ENCODE measurements at regions of chr5 and their contacts with region 1.

Region 1: GRCh38 chr5:39209924-39210323 is 9.4 kb downstream of the FYB1 start:
- DNase-seq: peak in 8 of 9 donors; percentile 77 to 86 (median 81)
- ATAC-seq: peak; percentile 84
- H3K4me3 ChIP-seq: peak overlapping the region; percentile 36
- H3K4me3 Mint-ChIP-seq: peak overlapping the region; percentile 70 to 98 (median 84)
- H3K27ac ChIP-seq: peak overlapping the region; percentile 93
- H3K27ac Mint-ChIP-seq: peak overlapping the region; percentile 93 to 99 (median 98)
- H3K4me1 ChIP-seq: peaks cover 91 to 98% of the 10 kb centered on the region in 2 donors
- H3K4me1 Mint-ChIP-seq: peaks cover 71 to 99% (median 95%) of the 10 kb centered on the region in 7 donors
- H3K27me3 ChIP-seq: no peaks in the 10 kb centered on the region
- H3K27me3 Mint-ChIP-seq: peaks cover 0 to 2% (median 0%) of the 10 kb centered on the region in 5 donors

Region 2: DNA sequence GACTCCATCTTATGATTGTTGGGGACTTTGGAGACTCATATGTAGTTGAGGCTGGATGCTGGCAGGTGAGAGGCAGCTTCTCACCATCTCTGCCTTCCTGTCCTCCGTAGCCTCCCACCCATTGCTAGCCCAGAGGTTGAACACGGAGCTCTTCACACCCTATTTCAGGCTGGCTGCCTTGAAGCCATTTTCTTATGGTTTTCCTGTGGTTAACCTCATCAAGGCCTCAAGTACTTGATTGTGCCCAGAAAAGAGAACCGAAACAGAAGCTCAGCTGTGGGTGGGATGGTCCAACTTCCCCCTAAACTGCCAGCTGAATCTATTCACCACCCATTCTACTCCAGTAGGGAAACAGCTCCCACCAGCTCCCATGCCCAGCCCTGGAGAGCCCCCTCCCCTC is 756.4 kb before region 1 on chr5:
- CTCF ChIA-PET with region 1: no interaction called
- POLR2A ChIA-PET with region 1: no interaction called
- intact Hi-C with region 1: loop called in 1 of 2 experiments (anchors 5 kb)
- DNase-seq: peak in 8 of 9 donors; percentile 50 to 82 (median 73)
- ATAC-seq: peak; percentile 86
- H3K4me3 ChIP-seq: no peak overlapping the region
- H3K4me3 Mint-ChIP-seq: peak overlapping the region; percentile 36 to 77 (median 66)
- H3K27ac ChIP-seq: no peak overlapping the region
- H3K27ac Mint-ChIP-seq: peak overlapping the region in 8 of 9 donors; percentile 6 to 82 (median 43)
- H3K4me1 ChIP-seq: peaks cover 21 to 32% of the 10 kb centered on the region in 2 donors
- H3K4me1 Mint-ChIP-seq: peaks cover 19 to 38% (median 30%) of the 10 kb centered on the region in 7 donors
- H3K27me3 ChIP-seq: peaks cover 0 to 3% of the 10 kb centered on the region in 2 donors
- H3K27me3 Mint-ChIP-seq: peaks cover 68 to 89% (median 82%) of the 10 kb centered on the region in 5 donors

Region 3: GRCh38 chr5:39164529-39165402 is 45.2 kb before region 1 on chr5:
- CTCF ChIA-PET with region 1: interaction called, 3 read pairs
- POLR2A ChIA-PET with region 1: interaction called, 679 read pairs
- intact Hi-C with region 1: loop called in 1 of 2 experiments (anchors 1 kb)
- DNase-seq: peak in 1 of 9 donors; percentile 34
- ATAC-seq: peak; percentile 71
- H3K4me3 ChIP-seq: peak overlapping the region; percentile 12
- H3K4me3 Mint-ChIP-seq: peak overlapping the region; percentile 58 to 83 (median 76)
- H3K27ac ChIP-seq: peak overlapping the region; percentile 60
- H3K27ac Mint-ChIP-seq: peak overlapping the region; percentile 78 to 96 (median 89)
- H3K4me1 ChIP-seq: peaks cover 73 to 74% of the 10 kb centered on the region in 2 donors
- H3K4me1 Mint-ChIP-seq: peaks cover 71 to 99% (median 95%) of the 10 kb centered on the region in 7 donors
- H3K27me3 ChIP-seq: no peaks in the 10 kb centered on the region
- H3K27me3 Mint-ChIP-seq: no peaks in the 10 kb centered on the region

Region 4: DNA sequence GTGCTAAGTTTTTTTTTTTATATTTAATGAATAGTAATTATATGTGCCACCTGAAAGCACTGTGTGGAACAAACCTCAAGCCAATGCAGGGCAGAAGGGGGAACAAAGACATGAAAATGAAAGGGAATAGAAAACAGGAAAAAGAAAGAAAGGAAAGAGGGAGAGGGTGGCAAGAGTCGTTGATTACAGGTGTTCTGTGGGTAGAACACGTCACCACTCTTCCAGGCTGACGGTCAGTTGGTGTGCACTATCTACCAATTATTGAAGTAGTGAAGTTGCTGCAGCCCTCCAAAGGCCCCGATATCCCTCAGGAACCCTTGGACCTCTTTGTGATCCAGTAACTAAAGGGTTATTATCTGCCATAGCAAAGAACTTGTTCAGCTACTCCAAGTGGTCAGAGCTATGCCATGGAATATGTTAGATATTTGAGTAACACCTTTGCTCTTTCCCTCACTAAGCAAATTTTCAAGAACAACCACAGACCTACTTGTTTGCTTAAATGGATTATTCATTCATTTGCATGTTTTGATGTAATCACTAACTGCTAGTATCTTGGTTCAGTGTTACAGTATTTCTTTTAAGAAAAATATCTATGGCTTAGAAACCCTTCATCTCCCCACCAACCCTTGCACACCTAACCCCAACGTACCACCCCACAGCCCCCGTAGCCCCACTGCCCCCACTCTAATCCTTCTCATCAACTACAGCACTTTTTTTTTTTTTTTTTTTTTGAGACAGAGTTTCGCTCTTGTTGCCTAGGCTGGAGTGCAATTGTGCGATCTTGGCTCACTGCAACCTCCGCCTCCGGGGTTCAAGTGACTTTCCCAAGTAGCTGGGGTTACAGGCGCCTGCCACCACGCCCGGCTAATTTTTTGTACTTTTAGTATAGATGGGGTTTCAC is 21.8 kb before region 1 on chr5:
- CTCF ChIA-PET with region 1: interaction called, 6 read pairs
- POLR2A ChIA-PET with region 1: interaction called, 679 read pairs
- intact Hi-C with region 1: loop called in 1 of 2 experiments (anchors 1 kb)
- DNase-seq: peak in 2 of 9 donors; percentile 46 to 50
- ATAC-seq: peak; percentile 45
- H3K4me3 ChIP-seq: peak overlapping the region; percentile 36
- H3K4me3 Mint-ChIP-seq: peak overlapping the region; percentile 78 to 98 (median 88)
- H3K27ac ChIP-seq: peak overlapping the region; percentile 73
- H3K27ac Mint-ChIP-seq: peak overlapping the region; percentile 92 to 99 (median 98)
- H3K4me1 ChIP-seq: peaks cover 75 to 85% of the 10 kb centered on the region in 2 donors
- H3K4me1 Mint-ChIP-seq: peaks cover 58 to 97% (median 91%) of the 10 kb centered on the region in 7 donors
- H3K27me3 ChIP-seq: no peaks in the 10 kb centered on the region
- H3K27me3 Mint-ChIP-seq: no peaks in the 10 kb centered on the region

Region 5: GRCh38 chr5:39194466-39195136 is 15.3 kb before region 1 on chr5:
- CTCF ChIA-PET with region 1: interaction called, 37 read pairs
- POLR2A ChIA-PET with region 1: interaction called, 301 read pairs
- intact Hi-C with region 1: no loop called
- DNase-seq: peak in 1 of 9 donors; percentile 17
- ATAC-seq: no peak
- H3K4me3 ChIP-seq: peak overlapping the region; percentile 46
- H3K4me3 Mint-ChIP-seq: peak overlapping the region; percentile 75 to 98 (median 88)
- H3K27ac ChIP-seq: peak overlapping the region; percentile 83
- H3K27ac Mint-ChIP-seq: peak overlapping the region; percentile 85 to 98 (median 94)
- H3K4me1 ChIP-seq: peaks cover 67 to 69% of the 10 kb centered on the region in 2 donors
- H3K4me1 Mint-ChIP-seq: peaks cover 52 to 78% (median 70%) of the 10 kb centered on the region in 7 donors
- H3K27me3 ChIP-seq: no peaks in the 10 kb centered on the region
- H3K27me3 Mint-ChIP-seq: no peaks in the 10 kb centered on the region

Region 6: GRCh38 chr5:39274398-39275085 is 64.6 kb after region 1 on chr5:
- CTCF ChIA-PET with region 1: no interaction called
- POLR2A ChIA-PET with region 1: interaction called, 10 read pairs
- intact Hi-C with region 1: no loop called
- DNase-seq: peak in 7 of 9 donors; percentile 29 to 52 (median 46)
- ATAC-seq: peak; percentile 68
- H3K4me3 ChIP-seq: peak overlapping the region; percentile 59
- H3K4me3 Mint-ChIP-seq: peak overlapping the region; percentile 63 to 88 (median 85)
- H3K27ac ChIP-seq: peak overlapping the region; percentile 74
- H3K27ac Mint-ChIP-seq: peak overlapping the region; percentile 92 to 98 (median 96)
- H3K4me1 ChIP-seq: peaks cover 34 to 49% of the 10 kb centered on the region in 2 donors
- H3K4me1 Mint-ChIP-seq: peaks cover 25 to 67% (median 47%) of the 10 kb centered on the region in 7 donors
- H3K27me3 ChIP-seq: no peaks in the 10 kb centered on the region
- H3K27me3 Mint-ChIP-seq: no peaks in the 10 kb centered on the region

Region 7: GRCh38 chr5:40404613-40405012 is 1194.7 kb after region 1 on chr5:
- CTCF ChIA-PET with region 1: no interaction called
- POLR2A ChIA-PET with region 1: no interaction called
- intact Hi-C with region 1: loop called in 1 of 2 experiments (anchors 10 kb)
- DNase-seq: peak in 7 of 9 donors; percentile 36 to 66 (median 60)
- ATAC-seq: peak; percentile 73
- H3K4me3 ChIP-seq: no peak overlapping the region
- H3K4me3 Mint-ChIP-seq: peak overlapping the region in 9 of 10 donors; percentile 34 to 83 (median 62)
- H3K27ac ChIP-seq: peak overlapping the region; percentile 99
- H3K27ac Mint-ChIP-seq: peak overlapping the region; percentile 95 to 100 (median 99)
- H3K4me1 ChIP-seq: peaks cover 48 to 50% of the 10 kb centered on the region in 2 donors
- H3K4me1 Mint-ChIP-seq: peaks cover 43 to 83% (median 80%) of the 10 kb centered on the region in 7 donors
- H3K27me3 ChIP-seq: no peaks in the 10 kb centered on the region
- H3K27me3 Mint-ChIP-seq: no peaks in the 10 kb centered on the region

Measured in naive thymus-derived CD4-positive, alpha-beta T cell (primary cell).